Activated naive CD4-positive, alpha-beta T cell treated with anti-CD3 and anti-CD28 coated beads, Interleukin-2, amount 10 ng/mL, durations not matched to agents 7 days and 5 days (primary cell): ENCODE measurements at regions of chr2 and their contacts with region 1.

Region 1: DNA sequence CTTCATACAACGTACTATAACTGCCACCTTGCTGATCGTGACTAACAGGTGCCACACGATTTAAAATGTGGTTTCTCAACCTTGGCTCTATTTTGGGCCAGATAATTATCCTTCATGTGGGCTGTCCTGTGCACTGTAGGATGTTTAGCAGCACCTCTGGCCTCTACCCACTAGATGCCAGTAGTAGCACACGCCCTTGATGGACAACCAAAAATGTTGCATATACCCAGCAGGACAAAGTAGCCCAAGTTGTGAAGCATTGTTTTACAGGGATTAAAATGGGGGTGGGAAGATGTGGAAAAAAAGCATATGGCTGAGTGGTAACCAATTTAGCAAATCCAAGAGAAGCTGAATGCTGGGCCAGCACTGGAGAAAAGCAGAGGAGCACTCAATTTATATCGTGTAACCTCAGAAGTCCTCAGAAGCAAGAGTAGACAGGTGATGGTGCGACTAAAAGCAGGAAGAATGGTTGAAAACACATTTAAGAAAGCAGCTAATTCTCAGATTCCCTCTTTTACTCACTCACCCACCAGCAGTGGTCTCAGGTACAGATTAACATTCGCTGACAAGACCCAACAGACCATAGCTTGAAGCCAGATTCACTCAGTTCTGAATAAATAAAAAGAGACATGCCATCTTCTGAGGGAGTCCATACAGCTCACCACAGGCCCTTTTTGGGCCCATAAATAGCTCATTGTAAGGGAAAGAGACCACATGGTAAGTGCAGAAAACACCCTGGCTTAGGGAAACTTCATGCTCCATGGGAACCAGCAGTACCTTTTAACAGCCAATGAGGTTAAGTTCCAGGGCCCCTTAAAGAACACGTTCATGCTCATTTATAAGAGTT is 50.6 kb downstream of the RAPH1 start:
- DNase-seq: peak; percentile 70
- H3K4me3 Mint-ChIP-seq: no peak overlapping the region
- H3K27ac Mint-ChIP-seq: no peak overlapping the region
- H3K4me1 Mint-ChIP-seq: peaks cover 5% of the 10 kb centered on the region
- H3K27me3 Mint-ChIP-seq: no peaks in the 10 kb centered on the region

Region 2: GRCh38 chr2:203209538-203209937 is 275.0 kb before region 1 on chr2:
- CTCF ChIA-PET with region 1: no interaction called
- DNase-seq: no peak
- H3K4me3 Mint-ChIP-seq: no peak overlapping the region
- H3K27ac Mint-ChIP-seq: no peak overlapping the region
- H3K4me1 Mint-ChIP-seq: peaks cover 11% of the 10 kb centered on the region
- H3K27me3 Mint-ChIP-seq: no peaks in the 10 kb centered on the region

Region 3: GRCh38 chr2:203650860-203651613 is 166.5 kb after region 1 on chr2:
- CTCF ChIA-PET with region 1: interaction called, 16 read pairs
- DNase-seq: no peak
- H3K4me3 Mint-ChIP-seq: no peak overlapping the region
- H3K27ac Mint-ChIP-seq: no peak overlapping the region
- H3K4me1 Mint-ChIP-seq: peaks cover 20% of the 10 kb centered on the region
- H3K27me3 Mint-ChIP-seq: peaks cover 3% of the 10 kb centered on the region